ENCODE measurements at regions of chr15 and their contacts with region 1.

Region 1: DNA sequence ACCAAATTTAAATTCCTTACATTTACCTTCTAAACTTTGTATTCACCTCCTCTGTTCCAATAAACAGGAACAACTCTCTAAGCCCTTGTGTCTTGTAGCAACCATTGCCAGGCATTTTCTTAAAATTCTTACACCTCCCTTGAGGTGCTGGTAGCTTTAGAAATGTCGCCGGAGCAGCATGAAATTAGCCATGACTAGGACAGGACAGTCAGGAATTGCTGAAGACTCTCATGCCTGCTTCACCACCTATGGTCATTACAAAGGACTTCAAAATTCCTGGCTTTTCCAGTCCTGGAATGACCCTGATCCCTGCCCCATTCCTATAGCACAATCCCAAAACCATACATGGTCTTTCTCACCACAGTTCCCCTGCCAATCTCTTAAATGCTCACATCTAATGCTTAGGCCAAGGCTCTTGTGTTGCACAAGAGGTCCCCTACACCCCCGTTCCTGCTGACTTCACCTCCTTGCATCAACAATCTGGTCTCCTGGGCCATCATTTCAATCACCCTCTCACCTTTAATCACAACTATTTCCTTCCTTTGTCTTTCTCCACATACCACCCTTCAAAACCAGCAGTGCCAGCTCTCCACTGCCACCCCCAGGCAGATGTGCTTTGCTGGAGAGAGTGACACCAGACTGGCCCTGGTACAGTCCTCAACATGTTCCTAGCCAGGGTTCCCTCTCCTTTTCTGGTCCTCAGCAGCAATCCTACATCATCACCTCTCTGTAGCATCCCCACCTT is 113.2 kb upstream of the TJP1 start:
- DNase-seq: peak in 2 of 3 donors; percentile 51 to 73
- ATAC-seq: peak; percentile 82
- H3K4me3 ChIP-seq: no peak overlapping the region
- H3K4me1 ChIP-seq: peaks cover 5% of the 10 kb centered on the region
- CTCF ChIP-seq: no peak

Region 2: DNA sequence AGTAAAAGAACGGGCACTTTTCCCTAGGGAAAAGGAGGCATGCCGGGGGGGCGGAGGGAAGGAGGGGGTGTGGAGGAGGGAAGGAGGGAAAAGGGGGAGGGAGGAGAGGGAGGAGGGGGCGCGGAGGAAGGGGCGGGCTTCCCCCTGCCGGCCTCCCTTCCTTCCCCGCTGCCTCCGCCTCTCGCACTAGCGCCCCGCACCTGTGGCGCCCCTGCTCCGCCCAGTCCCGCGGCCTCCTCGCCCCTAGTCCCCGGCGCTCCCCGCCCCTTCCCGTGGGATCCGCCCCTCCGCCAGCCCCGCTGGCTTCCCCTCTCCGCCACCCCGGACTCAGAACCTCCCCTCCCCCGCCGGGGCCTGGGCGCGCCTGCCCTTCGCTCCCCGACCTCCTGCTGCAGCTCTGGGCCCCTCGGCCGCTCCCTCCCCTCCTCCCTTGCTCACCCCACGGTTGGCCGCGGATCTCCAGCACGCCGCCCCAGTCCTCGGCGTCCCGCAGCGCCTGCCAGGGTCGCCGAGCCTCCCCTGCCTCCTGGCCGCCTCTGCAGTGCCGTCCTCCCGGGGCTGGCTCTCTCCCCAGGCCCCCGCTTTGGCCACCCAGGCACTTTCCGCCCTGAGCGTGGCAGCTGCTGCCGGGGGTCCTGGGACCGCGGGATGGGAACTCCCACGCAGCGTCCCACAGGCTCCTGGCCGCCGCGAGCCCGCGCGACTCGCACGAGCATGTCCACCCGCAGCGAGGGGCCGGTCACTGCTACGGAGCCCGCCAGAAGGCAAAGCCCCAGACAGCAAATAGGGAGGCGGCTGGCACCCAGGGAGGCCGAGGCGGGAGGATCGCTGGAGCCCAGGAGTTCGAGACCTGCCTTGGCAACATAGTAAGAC is 260.6 kb before region 1 on chr15:
- intact Hi-C with region 1: loop called in 1 of 2 experiments (anchors 10 kb)
- DNase-seq: peak; percentile 80 to 89 (median 83)
- ATAC-seq: peak; percentile 59
- H3K4me3 ChIP-seq: no peak overlapping the region
- H3K4me1 ChIP-seq: peaks cover 23% of the 10 kb centered on the region
- CTCF ChIP-seq: no peak

Region 3: GRCh38 chr15:29870495-29871151 is 64.8 kb before region 1 on chr15:
- intact Hi-C with region 1: loop called in 1 of 2 experiments (anchors 10 kb)
- DNase-seq: no peak
- ATAC-seq: no peak
- H3K4me3 ChIP-seq: no peak overlapping the region
- H3K4me1 ChIP-seq: no peaks in the 10 kb centered on the region
- CTCF ChIP-seq: no peak